ENCODE measurements at regions of chr2 and their contacts with region 1.

Region 1: GRCh38 chr2:239991689-239992314 is 33.3 kb downstream of the NDUFA10 start:
- DNase-seq: no peak
- H3K4me3 ChIP-seq: no peak overlapping the region
- H3K27ac ChIP-seq: no peak overlapping the region
- H3K4me1 ChIP-seq: no peaks in the 10 kb centered on the region
- H3K27me3 ChIP-seq: no peaks in the 10 kb centered on the region
- CTCF ChIP-seq: peak; percentile 33 to 85 (median 70)
- POLR2A ChIP-seq: no peak

Region 2: DNA sequence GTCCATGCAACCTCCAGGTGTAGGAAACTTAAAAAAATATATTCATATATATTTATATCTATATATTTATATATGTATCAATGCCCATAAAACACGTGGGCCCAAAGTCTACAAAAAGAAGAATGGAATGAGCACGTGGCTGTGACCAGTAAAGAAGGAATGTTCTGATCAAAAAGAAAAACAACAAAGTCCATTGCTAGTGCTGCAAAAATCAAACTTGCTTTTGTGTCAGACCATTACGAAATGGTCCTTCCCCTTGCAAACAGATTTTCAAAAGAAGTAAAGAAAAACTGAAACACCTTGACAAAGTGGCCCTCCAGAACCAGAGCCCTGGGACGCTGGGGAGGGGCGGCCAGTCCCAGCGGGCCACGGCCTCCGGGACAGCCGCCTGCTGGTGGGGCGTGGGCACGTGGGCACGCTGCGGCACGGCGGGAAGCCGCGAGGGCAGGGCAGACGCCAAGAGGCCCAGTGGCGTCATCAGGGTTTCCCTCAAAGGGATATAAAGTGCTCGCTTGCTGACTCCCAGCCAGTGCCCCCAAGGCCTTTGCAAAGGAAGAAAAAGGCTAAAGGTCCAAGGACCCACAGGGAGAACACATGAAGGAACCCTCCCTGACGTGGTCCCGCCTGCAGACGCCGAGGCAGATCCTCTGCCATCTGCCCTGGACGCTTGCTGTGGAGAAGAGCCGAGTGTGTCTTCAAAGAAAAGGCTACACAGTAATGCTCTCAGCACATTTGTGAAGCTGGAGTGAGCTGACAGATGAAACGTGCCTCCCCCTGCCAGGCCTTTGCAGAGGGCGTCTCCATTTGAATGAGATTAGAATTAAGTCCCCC is 942.2 kb before region 1 on chr2:
- intact Hi-C with region 1: loop called (anchors 10 kb)
- DNase-seq: no peak
- H3K4me3 ChIP-seq: no peak overlapping the region
- H3K27ac ChIP-seq: no peak overlapping the region
- H3K4me1 ChIP-seq: no peaks in the 10 kb centered on the region
- H3K27me3 ChIP-seq: no peaks in the 10 kb centered on the region
- CTCF ChIP-seq: no peak
- POLR2A ChIP-seq: no peak

Region 3: DNA sequence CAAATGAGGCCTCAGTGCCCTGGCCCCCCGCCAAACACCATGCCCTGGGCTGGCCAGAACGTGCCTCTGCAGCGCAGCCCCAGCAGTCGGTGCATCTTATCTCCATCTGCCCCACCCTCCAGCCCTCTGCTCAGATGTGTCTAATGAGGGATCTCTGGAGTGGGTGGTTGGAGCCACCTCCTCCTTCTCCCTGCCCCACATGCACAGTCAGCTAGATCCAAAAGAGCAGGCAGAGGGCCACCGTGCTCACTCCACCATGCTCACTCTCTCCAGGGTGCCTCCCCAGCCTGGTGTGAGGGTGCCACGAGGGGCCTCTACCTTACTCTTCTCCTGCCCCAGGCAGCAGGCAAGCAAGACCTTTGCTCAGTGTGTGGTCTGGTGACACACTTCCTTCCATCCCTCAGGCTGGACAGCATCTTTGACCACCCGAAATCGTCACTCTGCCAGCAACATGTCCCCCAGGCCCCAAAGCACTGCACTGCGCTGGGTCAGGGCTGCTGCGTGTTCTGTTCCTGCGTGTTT is 324.9 kb before region 1 on chr2:
- intact Hi-C with region 1: no loop called
- DNase-seq: no peak
- H3K4me3 ChIP-seq: no peak overlapping the region
- H3K27ac ChIP-seq: no peak overlapping the region
- H3K4me1 ChIP-seq: no peaks in the 10 kb centered on the region
- H3K27me3 ChIP-seq: peaks cover 3% of the 10 kb centered on the region
- CTCF ChIP-seq: no peak
- POLR2A ChIP-seq: no peak